Sigmoid colon (tissue), 7 donors: ENCODE measurements at regions of chr12 and their contacts with region 1.

Region 1: DNA sequence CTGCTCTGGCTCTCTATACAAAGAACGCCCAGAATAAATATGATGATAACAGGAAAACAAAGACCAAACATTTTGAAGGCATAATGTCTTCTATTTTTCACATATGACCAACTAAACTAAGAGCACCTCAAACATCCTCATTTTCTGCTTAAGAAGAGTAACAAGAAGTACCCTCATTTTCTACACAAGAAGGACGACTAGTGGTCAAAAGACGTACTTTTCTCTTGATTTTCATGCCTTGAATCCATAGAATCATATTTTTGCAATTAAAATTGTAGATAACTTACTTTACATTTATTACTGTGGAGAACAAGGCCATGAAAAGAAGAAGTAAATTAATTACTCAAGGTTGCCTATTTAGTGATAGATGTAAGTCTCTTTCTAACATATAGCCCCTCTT is 358.6 kb downstream of the DUSP6 start:
- DNase-seq: no peak
- H3K4me3 ChIP-seq: no peak overlapping the region
- H3K27ac ChIP-seq: no peak overlapping the region
- H3K4me1 ChIP-seq: no peaks in the 10 kb centered on the region
- H3K27me3 ChIP-seq: no peaks in the 10 kb centered on the region
- CTCF ChIP-seq: peak; percentile 39 to 63 (median 58)
- EP300 ChIP-seq: no peak
- POLR2A ChIP-seq: no peak

Region 2: GRCh38 chr12:88111074-88111652 is 882.5 kb before region 1 on chr12:
- intact Hi-C with region 1: loop called (anchors 1 kb)
- DNase-seq: no peak
- H3K4me3 ChIP-seq: peak overlapping the region in 3 of 4 donors; percentile 12 to 32 (median 23)
- H3K27ac ChIP-seq: no peak overlapping the region
- H3K4me1 ChIP-seq: peaks cover 0 to 5% (median 0%) of the 10 kb centered on the region in 4 donors
- H3K27me3 ChIP-seq: no peaks in the 10 kb centered on the region
- CTCF ChIP-seq: peak in 3 of 4 experiments; percentile 21 to 34 (median 29)
- EP300 ChIP-seq: no peak
- POLR2A ChIP-seq: no peak

Region 3: DNA sequence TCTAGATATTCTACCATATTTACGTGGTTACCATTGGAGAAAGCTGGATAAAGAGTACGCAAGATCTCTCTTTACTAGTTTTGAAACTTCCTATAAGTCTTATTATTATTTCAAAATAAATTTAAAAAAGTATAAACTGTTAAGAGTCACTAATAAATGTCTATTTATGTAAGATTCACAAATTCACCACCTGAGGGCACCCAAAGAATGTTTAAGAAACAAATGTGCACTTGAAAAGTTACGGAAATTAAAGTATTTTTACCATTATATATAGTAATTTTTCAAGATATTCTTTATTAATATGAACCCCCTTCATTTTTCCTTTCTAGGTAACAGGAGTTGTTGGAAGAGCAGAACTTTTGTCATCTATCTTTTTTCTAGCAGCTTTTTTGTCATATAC is 839.7 kb before region 1 on chr12:
- intact Hi-C with region 1: loop called (anchors 5 kb)
- DNase-seq: no peak
- H3K4me3 ChIP-seq: no peak overlapping the region
- H3K27ac ChIP-seq: no peak overlapping the region
- H3K4me1 ChIP-seq: peaks cover 0 to 14% (median 5%) of the 10 kb centered on the region in 4 donors
- H3K27me3 ChIP-seq: no peaks in the 10 kb centered on the region
- CTCF ChIP-seq: peak in 3 of 4 experiments; percentile 27 to 40 (median 30)
- EP300 ChIP-seq: no peak
- POLR2A ChIP-seq: no peak

Region 4: GRCh38 chr12:88579161-88579517 is 414.5 kb before region 1 on chr12:
- intact Hi-C with region 1: loop called (anchors 5 kb)
- DNase-seq: no peak
- H3K4me3 ChIP-seq: peak overlapping the region; percentile 60 to 81 (median 66)
- H3K27ac ChIP-seq: peak overlapping the region; percentile 77 to 86 (median 85)
- H3K4me1 ChIP-seq: peaks cover 0 to 44% (median 34%) of the 10 kb centered on the region in 4 donors
- H3K27me3 ChIP-seq: no peaks in the 10 kb centered on the region
- CTCF ChIP-seq: peak; percentile 23 to 66 (median 60)
- EP300 ChIP-seq: no peak
- POLR2A ChIP-seq: no peak

Region 5: DNA sequence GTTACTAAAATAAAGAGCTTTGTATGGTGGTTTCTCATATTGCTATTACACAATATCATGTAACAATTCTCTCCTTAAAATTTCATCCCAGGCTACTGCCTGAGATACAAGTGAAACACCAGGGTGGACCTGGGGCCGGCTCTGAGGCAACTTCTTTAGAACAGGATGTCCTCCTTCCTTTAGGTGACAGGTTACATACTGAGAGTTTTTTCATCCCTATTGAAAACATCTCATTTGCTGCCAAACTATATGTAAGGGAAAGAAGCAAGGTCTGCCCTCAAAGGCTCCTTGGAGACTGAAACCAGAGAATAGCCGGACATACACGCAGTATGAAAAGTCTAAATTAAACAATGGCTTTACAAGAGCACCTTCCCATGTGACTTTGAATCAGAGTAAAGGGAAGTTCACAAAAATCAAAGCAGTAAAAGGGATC is 218.7 kb after region 1 on chr12:
- intact Hi-C with region 1: no loop called
- DNase-seq: peak; percentile 71
- H3K4me3 ChIP-seq: no peak overlapping the region
- H3K27ac ChIP-seq: peak overlapping the region in 1 of 4 donors; percentile 29
- H3K4me1 ChIP-seq: peaks cover 0 to 5% (median 0%) of the 10 kb centered on the region in 4 donors
- H3K27me3 ChIP-seq: no peaks in the 10 kb centered on the region
- CTCF ChIP-seq: no peak
- EP300 ChIP-seq: no peak
- POLR2A ChIP-seq: no peak